Activated T-helper 1 cell treated with anti-CD3 and anti-CD28 coated beads, Interleukin-12 subunit alpha, Interleukin-12 subunit beta, Interleukin-2, Interleukin-4 antibody, amounts not matched to agents 30 ng/mL and 10 ng/mL and 1 ng/mL, durations not matched to agents 14 hours and 24 hours and 36 hours (primary cell): ENCODE measurements at regions of chr6 and their contacts with region 1.

Region 1: DNA sequence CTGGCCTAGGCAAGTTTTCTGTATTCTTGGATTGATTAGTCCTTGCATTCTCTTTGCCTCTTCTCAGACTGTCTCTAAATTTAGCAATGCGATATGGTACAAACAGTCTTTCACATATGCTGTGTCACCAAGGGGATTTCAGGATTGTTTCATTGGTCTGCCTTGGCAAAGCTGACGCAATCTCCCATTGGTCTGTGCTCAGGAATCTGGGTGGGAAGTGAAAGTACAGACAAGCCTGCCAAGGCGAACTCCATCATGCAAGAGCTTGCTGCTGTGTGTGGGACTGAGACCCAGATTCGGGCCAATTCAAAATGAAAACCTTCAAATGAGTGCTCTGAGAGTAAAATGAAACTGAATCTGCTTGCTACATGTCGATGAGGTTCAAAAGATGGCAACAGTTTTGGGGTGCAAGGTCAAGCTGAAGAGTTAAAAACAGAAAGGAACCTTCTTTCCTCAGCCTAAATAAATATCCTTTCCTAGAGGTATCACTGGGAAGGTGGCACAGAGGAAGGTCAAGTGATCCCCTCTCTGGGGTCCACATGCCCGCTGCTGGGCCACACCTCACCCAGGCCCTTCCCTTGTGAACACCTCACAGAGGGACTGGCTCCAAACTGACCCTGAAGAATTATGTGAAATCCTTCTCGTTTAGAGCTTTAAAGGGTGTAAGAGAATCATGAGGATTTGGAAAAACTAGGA is 198.8 kb upstream of the PREP start:
- DNase-seq: peak; percentile 41
- H3K4me3 Mint-ChIP-seq: peak overlapping the region; percentile 64
- H3K27ac Mint-ChIP-seq: peak overlapping the region; percentile 89
- H3K4me1 Mint-ChIP-seq: peaks cover 37% of the 10 kb centered on the region
- H3K27me3 Mint-ChIP-seq: peaks cover 2% of the 10 kb centered on the region

Region 2: DNA sequence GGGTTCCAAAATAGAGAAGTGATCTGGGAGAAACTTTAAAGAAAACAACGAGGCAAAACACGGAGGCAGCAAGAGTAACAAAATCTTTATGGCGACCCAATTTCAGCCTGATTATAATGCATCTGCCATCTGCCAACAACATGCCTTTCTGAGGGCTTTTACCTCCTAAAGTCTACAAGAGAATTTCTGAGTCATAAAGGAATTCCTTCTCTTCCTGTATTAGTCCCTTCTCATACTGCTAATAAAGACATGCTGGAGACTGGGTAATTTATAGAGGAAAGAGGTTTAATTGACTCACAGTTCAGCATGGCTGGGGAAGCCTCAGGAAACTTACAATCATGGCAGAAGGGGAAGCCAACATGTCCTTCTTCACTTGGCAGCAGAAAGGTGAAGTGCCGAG is 968.6 kb before region 1 on chr6:
- intact Hi-C with region 1: no loop called
- DNase-seq: no peak
- H3K4me3 Mint-ChIP-seq: no peak overlapping the region
- H3K27ac Mint-ChIP-seq: no peak overlapping the region
- H3K4me1 Mint-ChIP-seq: no peaks in the 10 kb centered on the region
- H3K27me3 Mint-ChIP-seq: peaks cover 11% of the 10 kb centered on the region

Region 3: DNA sequence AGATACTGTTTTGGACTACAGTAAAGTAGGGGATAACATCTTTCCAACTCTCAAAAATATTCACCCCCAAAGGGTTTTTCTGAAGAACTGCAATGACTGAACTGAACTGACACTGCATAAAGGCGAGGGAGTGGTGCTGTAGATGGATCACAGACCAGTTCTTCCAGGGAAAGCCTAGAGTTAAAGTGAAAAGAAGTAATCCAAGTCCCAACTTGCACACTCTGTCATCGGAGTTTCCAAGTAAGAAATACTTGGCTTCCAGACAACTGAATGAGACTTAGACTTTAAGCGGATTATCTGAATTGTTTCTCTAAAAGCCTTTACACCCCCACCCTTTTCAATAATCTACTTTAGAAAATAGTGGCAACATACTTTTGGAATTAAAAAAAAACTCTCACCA is 64.7 kb before region 1 on chr6:
- intact Hi-C with region 1: no loop called
- DNase-seq: no peak
- H3K4me3 Mint-ChIP-seq: no peak overlapping the region
- H3K27ac Mint-ChIP-seq: no peak overlapping the region
- H3K4me1 Mint-ChIP-seq: no peaks in the 10 kb centered on the region
- H3K27me3 Mint-ChIP-seq: peaks cover 32% of the 10 kb centered on the region

Region 4: GRCh38 chr6:105560611-105561066 is 41.0 kb before region 1 on chr6:
- intact Hi-C with region 1: loop called (anchors 1 kb)
- DNase-seq: no peak
- H3K4me3 Mint-ChIP-seq: no peak overlapping the region
- H3K27ac Mint-ChIP-seq: no peak overlapping the region
- H3K4me1 Mint-ChIP-seq: peaks cover 14% of the 10 kb centered on the region
- H3K27me3 Mint-ChIP-seq: peaks cover 5% of the 10 kb centered on the region

Region 5: DNA sequence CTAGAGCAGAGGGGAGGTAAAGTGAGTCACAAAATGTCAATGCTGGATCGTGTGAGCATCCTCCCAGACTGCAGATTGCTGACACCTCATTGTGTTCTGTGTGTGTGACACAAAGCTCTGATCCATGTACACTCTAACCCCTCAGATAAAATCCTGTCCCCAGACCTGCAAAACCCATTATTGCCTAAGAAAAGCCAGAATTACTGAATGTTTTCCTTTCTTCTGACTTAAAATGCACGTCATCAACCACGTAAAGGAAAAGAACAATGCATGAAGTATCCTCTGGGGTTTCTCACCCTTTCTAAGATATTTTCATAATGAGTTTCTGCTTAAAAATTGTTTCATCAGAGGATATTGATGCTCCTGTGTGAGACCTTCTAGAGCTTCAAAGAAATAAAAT is 19.2 kb after region 1 on chr6:
- intact Hi-C with region 1: loop called (anchors 1 kb)
- DNase-seq: peak; percentile 19
- H3K4me3 Mint-ChIP-seq: peak overlapping the region; percentile 46
- H3K27ac Mint-ChIP-seq: peak overlapping the region; percentile 91
- H3K4me1 Mint-ChIP-seq: peaks cover 46% of the 10 kb centered on the region
- H3K27me3 Mint-ChIP-seq: peaks cover 2% of the 10 kb centered on the region

Region 6: DNA sequence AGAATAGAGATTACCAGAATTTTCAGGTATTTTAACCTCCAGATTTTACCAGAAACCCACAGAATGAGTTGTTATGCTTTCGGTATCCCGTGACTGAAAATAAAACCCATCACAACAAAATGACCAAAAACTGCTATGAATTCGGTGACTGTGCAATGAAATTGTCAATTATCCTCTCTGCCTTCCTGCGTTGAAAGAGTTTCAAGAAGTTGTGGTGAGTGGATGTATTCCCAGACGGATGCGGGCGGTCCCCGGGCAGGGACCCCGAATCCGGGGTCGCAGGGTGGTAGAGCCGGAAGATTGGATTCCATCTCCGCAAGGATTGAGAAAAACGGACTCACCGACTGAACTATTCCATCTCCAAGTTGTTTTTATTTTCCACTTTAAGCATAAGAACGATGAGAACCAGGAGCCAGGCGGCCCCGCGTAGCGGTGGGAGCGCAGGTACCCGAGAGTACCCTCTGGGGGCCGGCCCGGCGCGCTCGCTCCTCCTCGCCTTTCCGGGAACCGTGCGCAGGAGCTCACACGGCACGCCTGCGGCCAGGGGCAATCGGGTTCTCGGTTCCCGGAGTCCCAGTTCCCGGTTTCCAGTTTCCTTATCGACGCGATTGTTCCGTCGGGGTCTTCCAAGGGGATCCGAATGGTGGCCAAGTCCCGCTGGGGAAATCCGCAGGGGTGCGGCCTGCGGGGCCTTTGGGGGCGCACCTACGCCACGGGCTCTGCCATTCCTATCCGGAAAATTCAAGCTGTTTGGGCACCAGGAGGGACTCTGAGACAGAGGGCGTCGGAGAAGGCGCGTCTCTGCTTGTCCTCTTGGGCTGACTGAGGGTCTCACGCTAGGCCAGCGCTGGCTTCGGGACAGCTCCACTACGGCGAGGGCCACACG is 379.6 kb after region 1 on chr6:
- intact Hi-C with region 1: loop called (anchors 5 kb)
- DNase-seq: peak; percentile 48
- H3K4me3 Mint-ChIP-seq: peak overlapping the region; percentile 84
- H3K27ac Mint-ChIP-seq: peak overlapping the region; percentile 91
- H3K4me1 Mint-ChIP-seq: peaks cover 79% of the 10 kb centered on the region
- H3K27me3 Mint-ChIP-seq: no peaks in the 10 kb centered on the region